PC-9 (cell line): ENCODE measurements at regions of chr9 and their contacts with region 1.

Region 1: DNA sequence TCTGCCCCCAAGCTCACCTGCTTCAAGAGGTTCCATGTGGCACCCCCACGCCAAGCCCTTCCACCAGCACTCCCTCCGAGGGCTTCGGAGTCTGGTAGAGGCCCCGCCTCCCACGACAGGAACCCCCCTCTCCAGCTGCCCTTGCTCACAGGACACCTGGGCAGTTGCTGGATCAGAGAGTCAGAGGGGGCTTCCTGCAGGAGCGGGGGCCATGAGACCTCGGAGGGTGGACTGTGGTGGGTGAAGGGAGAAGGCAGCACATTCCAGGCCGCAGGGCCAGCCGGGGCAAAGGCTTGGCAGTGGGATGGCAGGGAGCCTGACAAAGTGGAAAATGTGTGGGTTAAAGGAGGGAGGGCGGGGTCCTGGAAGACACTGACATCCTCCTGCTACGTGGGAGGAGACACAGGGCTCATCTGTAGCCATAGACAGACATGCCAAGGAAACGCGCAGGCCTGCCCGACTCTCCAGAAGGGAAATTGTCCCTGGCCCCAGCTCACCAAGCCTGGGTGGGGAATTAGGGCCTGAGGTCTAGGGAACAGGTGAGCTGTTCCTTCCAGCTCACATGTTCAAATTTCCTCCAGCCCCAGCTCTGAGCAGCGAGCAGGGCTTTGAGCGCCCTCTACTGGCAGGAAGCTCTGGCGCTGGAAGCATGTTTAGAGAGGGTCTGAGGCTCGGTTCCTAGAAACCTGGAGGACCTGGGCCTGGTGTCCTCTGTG is 74.2 kb downstream of the NTNG2 start:
- DNase-seq: peak; percentile 59 to 77
- H3K4me3 ChIP-seq: no peak overlapping the region
- H3K27ac ChIP-seq: no peak overlapping the region
- H3K4me1 ChIP-seq: no peaks in the 10 kb centered on the region
- H3K27me3 ChIP-seq: peaks cover 42% of the 10 kb centered on the region
- CTCF ChIP-seq: peak; percentile 93

Region 2: GRCh38 chr9:130973169-130973936 is 1262.8 kb before region 1 on chr9:
- CTCF ChIA-PET with region 1: no interaction called
- POLR2A ChIA-PET with region 1: no interaction called
- intact Hi-C with region 1: no loop called
- DNase-seq: no peak
- H3K4me3 ChIP-seq: no peak overlapping the region
- H3K27ac ChIP-seq: no peak overlapping the region
- H3K4me1 ChIP-seq: no peaks in the 10 kb centered on the region
- H3K27me3 ChIP-seq: peaks cover 36% of the 10 kb centered on the region
- CTCF ChIP-seq: no peak

Region 3: DNA sequence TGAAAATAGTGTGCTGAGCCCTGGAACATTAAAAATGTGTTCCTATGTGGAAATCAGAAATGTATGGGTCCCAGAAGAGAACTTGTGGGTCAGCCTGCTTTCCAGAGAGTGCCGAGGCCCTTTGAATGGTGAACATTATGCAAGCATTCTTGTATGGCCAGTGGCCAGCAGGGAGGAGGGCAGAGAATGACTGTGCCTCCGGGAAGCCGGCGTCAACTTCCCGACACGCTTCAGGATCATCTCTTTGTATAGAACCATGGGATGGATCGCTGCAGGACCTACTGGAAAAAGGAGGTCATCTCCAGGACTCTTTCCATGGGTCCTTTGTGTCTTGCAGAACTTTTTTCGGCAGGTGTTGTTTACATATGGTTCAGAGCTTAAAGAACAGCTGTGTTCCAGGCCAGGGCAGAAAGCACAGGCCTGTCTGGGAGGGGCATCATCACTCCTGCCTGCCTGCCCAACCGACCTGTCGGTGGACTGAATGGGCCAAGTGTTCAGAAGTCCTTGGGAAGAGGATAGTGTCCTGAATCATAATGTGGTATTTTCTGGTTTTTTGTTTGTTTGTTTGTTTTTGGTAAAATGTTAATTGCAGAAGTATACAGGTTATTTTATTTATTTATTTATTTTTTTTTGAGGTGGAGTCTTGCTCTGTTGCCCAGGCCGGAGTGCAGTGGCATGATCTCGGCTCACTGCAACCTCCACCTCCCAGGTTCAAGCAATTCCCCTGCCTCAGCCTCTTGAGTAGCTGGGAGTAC is 833.2 kb before region 1 on chr9:
- CTCF ChIA-PET with region 1: interaction called, 17 read pairs
- POLR2A ChIA-PET with region 1: no interaction called
- intact Hi-C with region 1: no loop called
- DNase-seq: peak in 1 of 2 experiments; percentile 69
- H3K4me3 ChIP-seq: no peak overlapping the region
- H3K27ac ChIP-seq: no peak overlapping the region
- H3K4me1 ChIP-seq: peaks cover 14% of the 10 kb centered on the region
- H3K27me3 ChIP-seq: no peaks in the 10 kb centered on the region
- CTCF ChIP-seq: no peak

Region 4: GRCh38 chr9:131755541-131756198 is 480.4 kb before region 1 on chr9:
- CTCF ChIA-PET with region 1: interaction called, 16 read pairs
- POLR2A ChIA-PET with region 1: no interaction called
- intact Hi-C with region 1: no loop called
- DNase-seq: peak; percentile 60 to 84
- H3K4me3 ChIP-seq: no peak overlapping the region
- H3K27ac ChIP-seq: no peak overlapping the region
- H3K4me1 ChIP-seq: 0 out of 2 replicates have a peak, but pooled peaks cover 5% of the 10 kb centered on the region
- H3K27me3 ChIP-seq: no peaks in the 10 kb centered on the region
- CTCF ChIP-seq: peak; percentile 73

Region 5: DNA sequence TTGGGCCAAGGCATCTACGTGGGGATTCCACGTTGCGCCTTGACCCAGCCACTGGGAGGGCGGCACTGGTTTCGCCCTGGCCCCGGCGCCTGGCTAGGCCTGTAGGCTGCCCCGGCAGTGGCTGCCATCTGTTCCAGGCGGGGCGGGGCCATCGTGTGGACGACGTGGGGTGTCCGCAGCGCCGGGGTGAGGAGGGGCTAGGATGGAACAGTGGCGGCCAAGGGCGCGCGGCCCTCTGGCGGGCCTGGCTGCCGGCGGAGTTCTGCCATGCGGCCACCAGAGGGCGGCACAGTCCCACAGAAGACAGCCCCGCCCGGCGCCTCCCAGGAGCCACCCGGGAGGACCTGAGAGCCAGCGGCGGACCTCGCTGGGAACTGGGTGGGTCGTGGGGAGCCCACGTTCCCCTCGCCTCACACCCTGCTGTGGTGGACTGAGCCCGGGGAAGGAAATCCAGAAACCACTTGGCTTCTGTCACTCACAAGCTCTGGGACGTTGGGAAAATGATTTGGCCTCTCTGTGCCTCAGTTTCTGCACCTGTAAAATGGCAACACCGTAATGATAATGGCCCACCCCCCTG is 473.7 kb before region 1 on chr9:
- CTCF ChIA-PET with region 1: interaction called, 7 read pairs
- POLR2A ChIA-PET with region 1: no interaction called
- intact Hi-C with region 1: loop called (anchors 1 kb)
- DNase-seq: peak in 1 of 2 experiments; percentile 75
- H3K4me3 ChIP-seq: no peak overlapping the region
- H3K27ac ChIP-seq: no peak overlapping the region
- H3K4me1 ChIP-seq: 0 out of 2 replicates have a peak, but pooled peaks cover 5% of the 10 kb centered on the region
- H3K27me3 ChIP-seq: peaks cover 38% of the 10 kb centered on the region
- CTCF ChIP-seq: peak; percentile 87

Region 6: DNA sequence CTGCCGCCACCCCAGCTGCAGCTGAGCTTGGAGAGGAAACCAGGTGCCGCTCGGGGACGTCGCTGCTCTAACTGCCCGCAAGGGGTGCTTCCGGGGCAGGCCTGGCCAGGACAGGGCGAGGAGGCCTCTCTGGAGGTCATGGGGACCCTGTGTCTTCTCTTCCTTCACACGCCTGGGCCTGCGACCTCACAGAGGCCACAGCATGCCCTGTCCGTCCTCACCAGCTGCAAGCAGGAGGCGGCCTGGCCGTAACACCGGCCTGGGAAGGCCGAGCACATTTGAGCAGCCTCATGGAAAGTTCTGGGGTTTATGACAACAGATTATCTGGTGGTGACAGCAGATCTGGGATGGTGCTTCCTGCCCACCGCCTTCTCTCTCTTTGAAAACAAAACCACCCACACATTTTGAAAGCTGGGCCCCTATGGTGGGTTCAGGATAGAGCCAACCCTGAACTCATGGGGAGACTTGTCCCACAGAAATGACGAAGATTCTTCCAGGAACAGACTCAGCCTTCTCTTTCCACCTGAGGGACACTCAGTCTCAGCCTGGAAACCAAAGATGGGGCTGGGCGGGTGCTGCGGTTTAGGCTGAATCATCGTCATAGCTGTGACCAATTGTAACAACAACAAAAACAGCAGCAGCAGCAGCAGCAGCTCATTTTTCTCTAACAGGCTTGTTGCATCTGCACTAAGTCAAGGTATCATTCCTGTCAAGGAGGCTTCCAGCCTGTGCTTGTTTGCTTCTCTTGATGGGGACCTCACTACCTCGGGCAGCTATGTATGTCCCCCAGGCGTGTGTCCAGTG is 396.6 kb before region 1 on chr9:
- CTCF ChIA-PET with region 1: no interaction called
- POLR2A ChIA-PET with region 1: no interaction called
- intact Hi-C with region 1: loop called (anchors 10 kb)
- DNase-seq: peak; percentile 42 to 60
- H3K4me3 ChIP-seq: no peak overlapping the region
- H3K27ac ChIP-seq: no peak overlapping the region
- H3K4me1 ChIP-seq: no peaks in the 10 kb centered on the region
- H3K27me3 ChIP-seq: peaks cover 25% of the 10 kb centered on the region
- CTCF ChIP-seq: no peak

Region 7: DNA sequence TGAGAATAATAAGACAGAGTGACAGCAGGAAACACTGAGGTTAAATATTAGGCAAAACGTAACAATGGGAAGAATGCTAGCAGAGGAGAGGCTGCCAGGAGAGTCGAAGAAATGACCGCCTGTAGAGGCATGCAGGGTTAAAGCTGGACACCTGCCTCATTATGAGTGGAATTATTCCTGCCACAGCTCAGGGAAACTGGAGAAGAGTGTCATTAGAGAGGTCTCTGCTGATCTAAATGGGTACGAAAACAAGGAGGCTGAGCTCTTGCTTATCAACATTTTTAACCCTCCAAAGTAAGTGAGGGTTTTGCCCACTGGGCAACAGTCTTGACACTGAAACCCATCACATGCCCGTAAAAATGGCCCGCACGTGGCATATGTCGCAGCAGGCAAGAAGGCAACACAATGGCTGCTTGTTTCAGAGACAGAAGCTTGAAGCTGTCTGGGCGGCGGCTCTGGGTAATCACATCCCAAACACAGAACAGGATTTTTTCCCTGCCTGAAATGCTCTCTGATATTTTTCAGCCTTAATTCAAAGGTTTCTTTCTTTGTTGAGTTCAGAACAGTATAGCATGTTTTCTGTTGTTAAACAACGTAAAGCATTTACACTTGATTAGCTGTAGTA is 275.1 kb before region 1 on chr9:
- CTCF ChIA-PET with region 1: no interaction called
- POLR2A ChIA-PET with region 1: interaction called, 4 read pairs
- intact Hi-C with region 1: loop called (anchors 10 kb)
- DNase-seq: no peak
- H3K4me3 ChIP-seq: no peak overlapping the region
- H3K27ac ChIP-seq: no peak overlapping the region
- H3K4me1 ChIP-seq: no peaks in the 10 kb centered on the region
- H3K27me3 ChIP-seq: no peaks in the 10 kb centered on the region
- CTCF ChIP-seq: no peak

Region 8: DNA sequence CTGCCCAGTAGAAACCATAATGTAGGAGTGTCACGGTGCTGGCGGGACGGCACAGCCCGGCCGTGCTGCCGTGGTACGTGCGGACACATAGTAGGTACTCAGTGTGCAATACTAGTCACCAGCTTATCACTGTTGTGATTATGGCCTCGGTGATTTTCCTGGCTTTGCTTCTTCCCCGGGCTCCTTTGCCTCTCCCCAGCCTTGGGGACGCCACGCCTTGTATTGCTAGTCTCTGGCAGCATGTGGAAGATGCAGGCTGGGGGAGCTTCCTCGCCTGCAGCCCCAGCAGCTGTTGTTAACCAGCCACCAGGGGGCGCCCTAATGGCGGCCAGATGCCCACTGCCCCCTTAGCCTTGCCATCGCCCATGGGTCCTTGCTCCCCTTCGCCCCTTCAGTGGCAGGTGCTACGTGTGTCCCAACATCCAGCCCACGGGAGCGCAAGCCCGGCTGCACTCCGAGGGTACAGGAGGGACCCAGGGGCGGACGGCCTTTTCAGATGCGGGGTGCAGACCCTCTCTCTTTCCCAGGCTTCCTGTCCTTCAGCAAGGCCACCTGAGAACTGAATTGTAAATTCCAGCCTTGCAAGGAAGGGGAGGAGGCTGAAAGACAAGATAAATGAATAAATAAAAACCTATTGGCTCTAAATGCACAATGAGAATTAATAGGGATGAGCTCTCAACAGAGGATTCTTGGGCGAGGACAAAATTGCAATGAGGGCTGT is 66.3 kb before region 1 on chr9:
- CTCF ChIA-PET with region 1: interaction called, 4 read pairs
- POLR2A ChIA-PET with region 1: no interaction called
- intact Hi-C with region 1: loop called (anchors 2 kb)
- DNase-seq: peak in 1 of 2 experiments; percentile 41
- H3K4me3 ChIP-seq: no peak overlapping the region
- H3K27ac ChIP-seq: no peak overlapping the region
- H3K4me1 ChIP-seq: no peaks in the 10 kb centered on the region
- H3K27me3 ChIP-seq: peaks cover 81% of the 10 kb centered on the region
- CTCF ChIP-seq: peak; percentile 94

Region 9: GRCh38 chr9:132301521-132301920 is 65.4 kb after region 1 on chr9:
- CTCF ChIA-PET with region 1: no interaction called
- POLR2A ChIA-PET with region 1: no interaction called
- intact Hi-C with region 1: no loop called
- DNase-seq: no peak
- H3K4me3 ChIP-seq: no peak overlapping the region
- H3K27ac ChIP-seq: no peak overlapping the region
- H3K4me1 ChIP-seq: no peaks in the 10 kb centered on the region
- H3K27me3 ChIP-seq: no peaks in the 10 kb centered on the region
- CTCF ChIP-seq: no peak